MCF 10A (cell line): ENCODE measurements at regions of chr6 and their contacts with region 1.

Region 1: GRCh38 chr6:83430611-83431563 is at the start of gene ME1:
- DNase-seq: peak; percentile 86
- H3K4me3 Mint-ChIP-seq: peak within 1 kb of the TSS; percentile 74
- H3K27ac Mint-ChIP-seq: peak within 1 kb of the TSS; percentile 73
- H3K4me1 Mint-ChIP-seq: peaks cover 16% of the 10 kb centered on the region
- H3K27me3 Mint-ChIP-seq: no peaks in the 10 kb centered on the region
- CTCF ChIP-seq: no peak
- total RNA-seq, gene ME1: 16.7 and 17.8 TPM in 2 replicates

Region 2: DNA sequence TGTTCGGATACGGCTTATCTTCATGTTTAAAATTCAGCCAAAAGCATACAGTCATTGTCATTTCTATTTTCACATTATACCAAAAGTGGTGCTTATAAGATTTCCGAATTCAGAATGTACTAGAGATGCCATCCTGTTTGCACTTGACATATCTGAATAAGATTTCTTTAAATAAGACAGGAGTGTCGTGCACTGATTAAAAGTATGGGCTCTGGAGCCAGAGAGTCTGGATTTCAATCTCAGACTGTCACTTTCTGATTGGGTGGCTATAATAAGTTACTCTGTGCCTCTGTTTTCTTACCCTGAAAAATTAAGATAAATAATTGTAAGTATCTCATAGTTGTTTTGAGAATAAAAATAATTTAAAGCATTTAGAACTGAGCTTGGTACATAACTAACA is 145.0 kb before region 1 on chr6:
- CTCF ChIA-PET with region 1: no interaction called
- POLR2A ChIA-PET with region 1: no interaction called
- intact Hi-C with region 1: no loop called
- DNase-seq: no peak
- H3K4me3 Mint-ChIP-seq: no peak overlapping the region
- H3K27ac Mint-ChIP-seq: no peak overlapping the region
- H3K4me1 Mint-ChIP-seq: no peaks in the 10 kb centered on the region
- H3K27me3 Mint-ChIP-seq: no peaks in the 10 kb centered on the region
- CTCF ChIP-seq: no peak

Region 3: GRCh38 chr6:83371423-83371822 is 59.5 kb before region 1 on chr6:
- CTCF ChIA-PET with region 1: no interaction called
- POLR2A ChIA-PET with region 1: no interaction called
- intact Hi-C with region 1: no loop called
- DNase-seq: no peak
- H3K4me3 Mint-ChIP-seq: no peak overlapping the region
- H3K27ac Mint-ChIP-seq: no peak overlapping the region
- H3K4me1 Mint-ChIP-seq: peaks cover 3% of the 10 kb centered on the region
- H3K27me3 Mint-ChIP-seq: no peaks in the 10 kb centered on the region
- CTCF ChIP-seq: no peak

Region 4: DNA sequence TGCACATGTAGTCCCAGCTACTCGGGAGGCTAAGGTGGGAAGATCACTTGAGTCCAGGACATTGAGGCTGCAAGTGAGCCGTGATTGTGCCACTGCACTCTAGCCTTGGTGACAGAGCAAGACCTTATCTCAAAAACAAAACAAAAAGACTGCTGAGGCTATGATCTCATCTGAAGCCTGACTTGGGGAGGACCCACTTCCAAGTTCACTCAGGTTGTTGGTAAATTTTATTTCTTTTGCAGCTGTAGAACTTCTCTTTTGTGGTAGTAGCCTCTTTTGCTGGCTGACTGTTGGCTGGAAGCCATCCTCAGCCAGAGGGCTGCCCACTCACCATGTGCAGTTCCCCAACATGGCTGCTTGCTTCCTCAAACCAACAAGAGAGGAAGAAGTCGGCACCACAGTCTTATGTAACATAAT is 36.7 kb after region 1 on chr6:
- CTCF ChIA-PET with region 1: no interaction called
- POLR2A ChIA-PET with region 1: interaction called, 12 read pairs
- intact Hi-C with region 1: loop called (anchors 5 kb)
- DNase-seq: no peak
- H3K4me3 Mint-ChIP-seq: no peak overlapping the region
- H3K27ac Mint-ChIP-seq: no peak overlapping the region
- H3K4me1 Mint-ChIP-seq: peaks cover 17% of the 10 kb centered on the region
- H3K27me3 Mint-ChIP-seq: no peaks in the 10 kb centered on the region
- CTCF ChIP-seq: no peak

Region 5: GRCh38 chr6:85163156-85164080 is 1732.5 kb after region 1 on chr6:
- CTCF ChIA-PET with region 1: no interaction called
- POLR2A ChIA-PET with region 1: no interaction called
- intact Hi-C with region 1: no loop called
- DNase-seq: no peak
- H3K4me3 Mint-ChIP-seq: no peak overlapping the region
- H3K27ac Mint-ChIP-seq: no peak overlapping the region
- H3K4me1 Mint-ChIP-seq: no peaks in the 10 kb centered on the region
- H3K27me3 Mint-ChIP-seq: no peaks in the 10 kb centered on the region
- CTCF ChIP-seq: no peak